Activated B cell treated with CpG ODN at 0.5 μM for 24 hours (primary cell): ENCODE measurements at regions of chr18 and their contacts with region 1.

Region 1: GRCh38 chr18:35040988-35041814 is at the start of gene MAPRE2:
- DNase-seq: peak; percentile 100
- ATAC-seq: peak; percentile 84
- H3K4me3 Mint-ChIP-seq: peak within 1 kb of the TSS; percentile 98
- H3K27ac Mint-ChIP-seq: peak within 1 kb of the TSS; percentile 98
- H3K4me1 Mint-ChIP-seq: peaks cover 85% of the 10 kb centered on the region
- H3K27me3 Mint-ChIP-seq: no peaks in the 10 kb centered on the region
- CTCF ChIP-seq: no peak
- total RNA-seq, gene MAPRE2: 47.9 and 53.8 TPM in 2 replicates

Region 2: GRCh38 chr18:34976899-34977837 is 64.0 kb before region 1 on chr18:
- CTCF ChIA-PET with region 1: no interaction called
- POLR2A ChIA-PET with region 1: interaction called, 3 read pairs
- intact Hi-C with region 1: loop called (anchors 2 kb)
- DNase-seq: peak; percentile 77
- ATAC-seq: peak; percentile 76
- H3K4me3 Mint-ChIP-seq: peak overlapping the region; percentile 89
- H3K27ac Mint-ChIP-seq: no peak overlapping the region
- H3K4me1 Mint-ChIP-seq: peaks cover 23% of the 10 kb centered on the region
- H3K27me3 Mint-ChIP-seq: peaks cover 18% of the 10 kb centered on the region
- CTCF ChIP-seq: no peak

Region 3: DNA sequence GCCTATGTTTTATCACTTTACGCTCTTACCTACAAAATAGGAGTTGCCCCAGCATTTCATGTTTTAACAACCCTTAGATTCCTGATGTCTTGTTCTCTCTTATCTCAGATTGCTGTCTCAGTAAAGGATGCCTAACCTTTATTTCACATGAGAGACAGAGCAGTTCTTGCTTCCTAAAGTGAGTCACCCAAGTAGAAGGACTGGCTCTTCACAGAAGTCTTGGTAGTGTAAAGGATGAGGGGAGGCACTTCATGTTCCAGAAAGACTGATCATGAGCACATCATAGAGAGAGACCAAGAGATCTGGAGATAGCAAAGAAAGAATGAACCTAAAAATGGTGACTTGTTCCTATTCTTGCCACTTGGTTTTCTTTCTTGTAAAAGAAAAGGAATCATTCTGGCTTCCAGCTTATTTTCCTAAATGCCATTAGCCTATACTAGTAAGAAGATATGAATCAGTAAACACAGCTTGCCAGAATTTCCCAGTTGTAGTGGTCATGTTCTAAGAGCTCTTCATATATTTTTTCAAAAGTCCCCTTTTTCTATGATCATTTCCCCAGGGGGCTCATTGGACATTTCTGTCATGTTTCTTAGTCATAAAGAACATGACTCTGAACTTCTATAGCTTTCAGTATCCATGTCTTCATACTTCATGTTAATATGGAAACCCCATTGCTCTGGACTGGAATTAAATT is 54.9 kb after region 1 on chr18:
- CTCF ChIA-PET with region 1: interaction called, 3 read pairs
- POLR2A ChIA-PET with region 1: interaction called, 28 read pairs
- intact Hi-C with region 1: loop called (anchors 1 kb)
- DNase-seq: no peak
- ATAC-seq: peak; percentile 88
- H3K4me3 Mint-ChIP-seq: peak overlapping the region; percentile 55
- H3K27ac Mint-ChIP-seq: peak overlapping the region; percentile 86
- H3K4me1 Mint-ChIP-seq: peaks cover 35% of the 10 kb centered on the region
- H3K27me3 Mint-ChIP-seq: no peaks in the 10 kb centered on the region
- CTCF ChIP-seq: no peak

Region 4: DNA sequence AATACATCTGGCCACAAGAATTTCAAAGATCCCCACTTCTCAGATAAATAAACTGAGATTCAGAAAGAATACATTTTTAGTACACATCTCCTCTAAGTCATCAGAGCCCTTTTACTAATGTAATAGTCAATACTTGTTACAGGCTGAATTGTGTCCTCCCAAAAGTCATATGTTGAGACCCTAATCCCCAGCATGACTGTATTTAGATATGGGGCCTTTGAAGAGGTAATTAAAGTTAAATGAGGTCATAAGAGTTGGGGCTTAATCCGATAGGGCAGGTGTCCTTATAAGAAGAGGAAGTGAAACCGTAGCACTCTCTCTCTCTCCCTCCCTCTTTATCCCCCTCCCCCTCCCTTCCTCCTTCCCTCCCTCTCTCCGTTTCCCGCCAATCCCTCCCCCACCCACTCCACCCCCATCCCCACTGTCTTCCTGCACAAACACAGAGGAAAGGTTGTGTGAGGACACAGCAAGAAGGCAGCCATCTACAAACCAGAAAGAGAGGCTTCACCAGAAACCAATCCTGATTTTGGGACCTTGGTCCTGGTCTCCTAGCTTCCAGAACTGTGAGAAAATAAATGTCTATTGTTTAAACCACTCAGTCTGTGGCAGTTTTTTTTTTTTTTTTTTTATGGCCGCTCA is 133.0 kb after region 1 on chr18:
- CTCF ChIA-PET with region 1: no interaction called
- POLR2A ChIA-PET with region 1: no interaction called
- intact Hi-C with region 1: loop called (anchors 1 kb)
- DNase-seq: no peak
- ATAC-seq: peak; percentile 95
- H3K4me3 Mint-ChIP-seq: peak overlapping the region; percentile 55
- H3K27ac Mint-ChIP-seq: peak overlapping the region; percentile 79
- H3K4me1 Mint-ChIP-seq: peaks cover 26% of the 10 kb centered on the region
- H3K27me3 Mint-ChIP-seq: no peaks in the 10 kb centered on the region
- CTCF ChIP-seq: no peak

Region 5: GRCh38 chr18:35343936-35344735 is 302.9 kb after region 1 on chr18 and contains the start of gene ZNF24:
- CTCF ChIA-PET with region 1: interaction called, 3 read pairs
- POLR2A ChIA-PET with region 1: interaction called, 8 read pairs
- intact Hi-C with region 1: loop called (anchors 1 kb)
- DNase-seq: peak; percentile 92
- ATAC-seq: peak; percentile 83
- H3K4me3 Mint-ChIP-seq: peak within 1 kb of the TSS; percentile 98
- H3K27ac Mint-ChIP-seq: peak within 1 kb of the TSS; percentile 96
- H3K4me1 Mint-ChIP-seq: peaks cover 59% of the 10 kb centered on the region
- H3K27me3 Mint-ChIP-seq: no peaks in the 10 kb centered on the region
- CTCF ChIP-seq: no peak
- total RNA-seq, gene ZNF24: 72.5 and 75.8 TPM in 2 replicates

Region 6: DNA sequence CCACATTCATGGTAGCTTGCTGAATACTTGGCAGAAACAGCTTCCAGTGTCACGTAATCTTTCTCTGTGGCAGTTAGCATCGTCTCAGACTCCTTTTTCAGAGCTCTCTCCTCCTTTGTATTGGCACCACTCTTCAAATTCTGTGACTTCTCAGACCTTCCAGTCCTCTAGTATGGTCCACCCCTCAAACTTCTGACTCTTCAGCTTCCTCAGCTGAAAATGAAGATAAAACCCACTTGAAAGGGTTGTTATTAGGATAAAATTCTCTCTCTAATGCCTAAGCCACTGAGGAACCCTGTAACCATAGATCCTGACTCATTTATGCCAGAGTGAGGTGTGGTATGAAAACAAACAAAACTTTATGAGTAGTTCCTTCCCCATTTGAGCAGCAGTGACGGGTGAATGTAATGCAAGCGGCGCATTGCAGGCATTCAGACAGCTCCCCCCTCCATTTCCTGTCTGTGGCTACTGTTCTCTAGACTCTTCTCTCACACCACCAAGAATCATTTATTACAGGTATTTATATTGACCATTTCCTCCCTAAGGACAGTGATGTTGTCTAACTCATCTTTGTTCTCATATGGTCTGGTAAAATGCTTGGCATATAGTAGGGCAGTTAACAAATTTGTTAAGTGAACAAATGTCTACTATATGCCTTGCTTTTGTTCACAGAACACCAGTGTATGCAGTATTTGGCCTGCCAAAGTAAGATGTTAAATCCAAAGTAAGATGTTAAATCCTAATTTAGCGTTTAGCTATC is 575.6 kb after region 1 on chr18:
- CTCF ChIA-PET with region 1: no interaction called
- POLR2A ChIA-PET with region 1: no interaction called
- intact Hi-C with region 1: loop called (anchors 10 kb)
- DNase-seq: peak; percentile 24
- ATAC-seq: peak; percentile 93
- H3K4me3 Mint-ChIP-seq: no peak overlapping the region
- H3K27ac Mint-ChIP-seq: no peak overlapping the region
- H3K4me1 Mint-ChIP-seq: peaks cover 12% of the 10 kb centered on the region
- H3K27me3 Mint-ChIP-seq: no peaks in the 10 kb centered on the region
- CTCF ChIP-seq: no peak